ENCODE measurements at regions of chr15 and their contacts with region 1.

Region 1: GRCh38 chr15:70488002-70488605 is 275.3 kb downstream of the UACA start:
- DNase-seq: peak; percentile 62 to 69
- ATAC-seq: peak; percentile 48 to 73 (median 62)
- H3K4me3 ChIP-seq: no peak overlapping the region
- H3K27ac ChIP-seq: peak overlapping the region in 1 of 10 donors; percentile 80
- H3K4me1 ChIP-seq: peaks cover 0 to 77% (median 0%) of the 10 kb centered on the region in 9 donors
- H3K27me3 ChIP-seq: no peaks in the 10 kb centered on the region
- CTCF ChIP-seq: peak; percentile 92 to 97 (median 96)

Region 2: GRCh38 chr15:69475769-69476358 is 1012.2 kb before region 1 on chr15:
- intact Hi-C with region 1: loop called in 9 of 10 experiments (anchors 1 to 5 kb)
- DNase-seq: peak; percentile 73 to 81
- ATAC-seq: peak; percentile 65 to 89 (median 80)
- H3K4me3 ChIP-seq: no peak overlapping the region
- H3K27ac ChIP-seq: no peak overlapping the region
- H3K4me1 ChIP-seq: peaks cover 0 to 3% (median 0%) of the 10 kb centered on the region in 9 donors
- H3K27me3 ChIP-seq: peaks cover 0 to 8% (median 0%) of the 10 kb centered on the region in 7 donors
- CTCF ChIP-seq: peak; percentile 82 to 97 (median 94)

Region 3: DNA sequence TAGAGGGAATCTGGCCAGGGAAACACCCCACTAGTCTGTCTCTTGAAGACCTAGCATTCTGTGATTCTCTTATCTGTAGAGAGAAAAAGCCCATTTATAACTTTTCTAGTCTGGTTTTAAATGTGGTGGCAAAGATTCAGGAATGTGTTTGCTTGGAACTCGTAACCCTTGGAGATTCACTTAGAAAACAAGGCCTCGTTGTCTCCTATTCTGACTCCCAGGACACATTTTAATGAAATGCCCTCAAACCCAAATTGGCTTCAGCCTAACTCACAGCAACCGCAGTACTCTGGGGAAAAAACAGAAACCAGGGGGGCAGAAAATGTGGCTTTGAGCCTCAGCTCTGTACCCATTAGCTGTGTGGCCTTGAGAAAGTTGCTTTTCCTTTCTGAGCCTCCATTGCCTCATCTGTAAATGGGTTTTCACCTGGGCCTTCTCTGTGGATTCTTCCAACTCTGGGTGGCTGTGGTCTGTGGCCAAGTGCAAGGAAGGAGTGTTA is 999.0 kb before region 1 on chr15:
- intact Hi-C with region 1: loop called in 1 of 10 experiments (anchors 5 kb)
- DNase-seq: no peak
- ATAC-seq: peak in 5 of 8 donors; percentile 12 to 53 (median 28)
- H3K4me3 ChIP-seq: no peak overlapping the region
- H3K27ac ChIP-seq: peak overlapping the region in 2 of 10 donors; percentile 4 to 16
- H3K4me1 ChIP-seq: peaks cover 0 to 14% (median 0%) of the 10 kb centered on the region in 9 donors
- H3K27me3 ChIP-seq: no peaks in the 10 kb centered on the region
- CTCF ChIP-seq: no peak

Region 4: DNA sequence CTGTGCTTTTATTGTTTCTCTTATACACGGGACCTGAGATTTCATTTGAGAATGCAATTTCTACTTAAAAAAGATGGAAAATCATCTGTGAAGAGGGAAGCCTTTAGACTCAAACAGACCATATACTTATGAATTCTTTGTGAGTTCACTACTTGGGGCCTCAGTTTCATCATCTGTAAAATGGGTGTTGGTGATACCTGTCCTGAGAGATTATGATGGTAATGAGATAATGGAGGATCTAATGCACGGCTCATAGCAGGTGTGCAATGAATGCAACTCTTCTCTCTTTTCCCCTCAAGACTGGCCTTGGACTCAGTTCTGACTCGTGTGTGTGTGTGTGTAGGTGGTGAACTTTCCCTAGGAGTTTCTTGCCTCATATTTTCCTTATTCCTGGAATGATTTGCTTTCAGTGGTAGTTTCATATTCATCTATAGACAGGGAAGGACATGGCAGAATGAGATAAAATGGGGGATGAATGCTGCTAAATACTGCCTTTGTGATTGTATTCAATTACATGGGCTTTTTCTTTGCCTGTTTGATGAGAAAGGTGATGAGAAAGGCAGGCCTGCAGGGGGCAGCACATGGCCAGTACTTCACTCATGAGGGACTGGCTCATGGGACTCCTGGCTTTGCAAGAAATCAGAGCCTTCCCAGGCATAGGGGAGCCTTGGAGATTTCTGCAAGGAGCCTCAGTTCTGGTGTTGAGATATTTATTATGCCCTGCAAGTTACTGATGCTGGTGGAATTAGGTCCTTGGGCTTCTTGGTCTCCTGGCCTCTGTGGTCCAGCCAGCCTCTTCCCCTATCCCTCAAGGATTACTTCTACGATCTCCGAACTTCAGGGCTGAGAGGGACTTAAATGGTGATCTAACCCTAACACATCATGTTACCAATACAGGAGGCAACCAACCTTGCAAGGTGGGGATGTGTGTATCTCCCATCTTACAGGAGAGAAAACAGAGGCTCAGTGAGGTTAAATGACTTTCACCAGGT is 964.8 kb before region 1 on chr15:
- intact Hi-C with region 1: loop called in 2 of 10 experiments (anchors 5 kb)
- DNase-seq: peak; percentile 71 to 76
- ATAC-seq: peak in 7 of 8 donors; percentile 60 to 82 (median 72)
- H3K4me3 ChIP-seq: no peak overlapping the region
- H3K27ac ChIP-seq: no peak overlapping the region
- H3K4me1 ChIP-seq: no peaks in the 10 kb centered on the region
- H3K27me3 ChIP-seq: peaks cover 0 to 8% (median under 1%) of the 10 kb centered on the region in 7 donors
- CTCF ChIP-seq: peak; percentile 28 to 73 (median 67)

Region 5: DNA sequence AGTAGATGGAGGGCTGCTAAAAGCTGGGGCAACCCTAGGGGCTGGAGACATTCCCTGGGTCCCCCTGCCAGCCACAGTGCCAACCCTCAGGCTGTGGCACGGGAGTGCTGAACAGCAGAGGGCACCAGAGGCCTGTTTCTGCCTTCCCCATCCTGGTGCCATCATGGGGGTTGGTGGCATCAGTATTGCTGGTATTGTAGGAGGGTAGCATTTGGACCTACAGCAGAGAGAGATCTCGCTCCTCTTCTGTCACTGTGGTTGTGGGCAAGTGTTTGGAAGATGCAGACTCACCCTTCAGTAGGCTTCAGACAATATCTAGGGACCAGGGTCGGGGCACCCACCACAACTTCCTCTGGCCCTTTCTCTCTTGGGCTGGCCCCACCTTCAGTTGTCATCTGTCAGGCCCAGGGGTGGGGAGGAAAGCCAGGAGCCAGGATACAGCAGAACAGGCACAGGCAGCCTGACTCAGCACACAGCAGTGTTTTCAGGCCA is 912.0 kb before region 1 on chr15:
- intact Hi-C with region 1: loop called in 6 of 10 experiments (anchors 2 to 10 kb)
- DNase-seq: peak; percentile 43 to 58
- ATAC-seq: peak; percentile 75 to 92 (median 86)
- H3K4me3 ChIP-seq: no peak overlapping the region
- H3K27ac ChIP-seq: no peak overlapping the region
- H3K4me1 ChIP-seq: peaks cover 0 to 31% (median 0%) of the 10 kb centered on the region in 9 donors
- H3K27me3 ChIP-seq: peaks cover 0 to 31% (median 17%) of the 10 kb centered on the region in 7 donors
- CTCF ChIP-seq: peak; percentile 49 to 78 (median 71)

Region 6: DNA sequence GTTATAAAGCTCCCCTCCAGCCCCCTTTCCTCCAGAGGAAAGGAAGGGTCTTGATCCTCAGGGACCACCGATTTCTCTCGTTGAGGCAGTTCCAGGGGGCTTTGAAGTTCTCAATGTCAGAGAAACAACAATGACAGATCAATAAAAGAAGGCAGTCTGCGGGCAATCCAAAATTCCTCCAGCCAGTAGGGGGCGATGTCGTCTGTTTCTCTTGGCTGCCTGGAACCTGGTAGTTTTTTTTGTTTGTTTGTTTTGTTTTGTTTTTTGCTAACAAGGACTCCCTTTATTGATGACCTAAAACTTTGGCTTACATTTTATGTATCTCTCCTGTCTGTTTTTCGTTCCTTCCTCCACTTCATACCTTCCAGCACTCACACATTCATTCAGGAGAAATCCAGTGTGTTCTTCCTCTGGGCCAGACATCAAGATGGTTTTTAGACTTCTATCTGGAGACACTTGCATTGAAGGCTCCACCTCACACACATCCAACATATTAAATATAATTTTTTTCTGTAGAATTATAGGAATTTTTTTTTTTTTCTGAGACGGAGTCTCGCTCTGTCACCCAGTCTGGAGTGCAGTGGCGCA is 758.8 kb before region 1 on chr15:
- intact Hi-C with region 1: loop called in 6 of 10 experiments (anchors 5 to 10 kb)
- DNase-seq: peak in 1 of 2 donors; percentile 17
- ATAC-seq: no peak
- H3K4me3 ChIP-seq: no peak overlapping the region
- H3K27ac ChIP-seq: no peak overlapping the region
- H3K4me1 ChIP-seq: peaks cover 0 to 44% (median 0%) of the 10 kb centered on the region in 9 donors
- H3K27me3 ChIP-seq: peaks cover 0 to 32% (median 9%) of the 10 kb centered on the region in 7 donors
- CTCF ChIP-seq: peak; percentile 64 to 84 (median 73)

Region 7: GRCh38 chr15:69735121-69735520 is 753.0 kb before region 1 on chr15:
- intact Hi-C with region 1: loop called in 1 of 10 experiments (anchors 5 kb)
- DNase-seq: no peak
- ATAC-seq: no peak
- H3K4me3 ChIP-seq: no peak overlapping the region
- H3K27ac ChIP-seq: no peak overlapping the region
- H3K4me1 ChIP-seq: peaks cover 0 to 9% (median 0%) of the 10 kb centered on the region in 9 donors
- H3K27me3 ChIP-seq: peaks cover 0 to 34% (median 12%) of the 10 kb centered on the region in 7 donors
- CTCF ChIP-seq: no peak